Naive thymus-derived CD4-positive, alpha-beta T cell (primary cell): ENCODE measurements at regions of chr3 and their contacts with region 1.

Region 1: DNA sequence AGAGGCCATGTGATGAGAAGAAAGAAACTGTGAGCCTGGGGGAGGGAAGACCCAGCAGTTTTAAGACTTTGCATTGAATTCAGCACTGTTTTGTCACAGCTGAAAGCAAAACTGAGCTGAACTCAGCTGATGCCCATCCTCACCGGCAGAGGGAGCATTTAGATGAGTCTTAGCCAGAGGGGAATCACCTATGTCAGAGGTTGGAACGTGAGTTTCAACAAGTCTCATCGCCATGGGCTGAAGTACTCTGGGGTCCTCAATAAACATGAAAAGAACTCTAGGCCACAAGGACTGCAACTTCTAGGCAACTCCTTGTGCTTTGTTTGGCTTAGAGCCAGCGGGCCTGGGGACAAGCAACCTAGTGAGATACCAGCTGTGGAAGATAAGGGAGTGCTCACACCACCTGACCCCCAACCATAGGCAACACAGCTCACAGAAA is 324.5 kb downstream of the TBL1XR1 start:
- DNase-seq: peak; percentile 10 to 61 (median 39)
- ATAC-seq: peak; percentile 83
- H3K4me3 ChIP-seq: no peak overlapping the region
- H3K4me3 Mint-ChIP-seq: no peak overlapping the region
- H3K27ac ChIP-seq: no peak overlapping the region
- H3K27ac Mint-ChIP-seq: peak overlapping the region in 3 of 9 donors; percentile 8 to 63 (median 26)
- H3K4me1 ChIP-seq: no peaks in the 10 kb centered on the region
- H3K4me1 Mint-ChIP-seq: peaks cover 0 to 9% (median 6%) of the 10 kb centered on the region in 7 donors
- H3K27me3 ChIP-seq: no peaks in the 10 kb centered on the region
- H3K27me3 Mint-ChIP-seq: peaks cover 0 to 11% (median 3%) of the 10 kb centered on the region in 5 donors

Region 2: DNA sequence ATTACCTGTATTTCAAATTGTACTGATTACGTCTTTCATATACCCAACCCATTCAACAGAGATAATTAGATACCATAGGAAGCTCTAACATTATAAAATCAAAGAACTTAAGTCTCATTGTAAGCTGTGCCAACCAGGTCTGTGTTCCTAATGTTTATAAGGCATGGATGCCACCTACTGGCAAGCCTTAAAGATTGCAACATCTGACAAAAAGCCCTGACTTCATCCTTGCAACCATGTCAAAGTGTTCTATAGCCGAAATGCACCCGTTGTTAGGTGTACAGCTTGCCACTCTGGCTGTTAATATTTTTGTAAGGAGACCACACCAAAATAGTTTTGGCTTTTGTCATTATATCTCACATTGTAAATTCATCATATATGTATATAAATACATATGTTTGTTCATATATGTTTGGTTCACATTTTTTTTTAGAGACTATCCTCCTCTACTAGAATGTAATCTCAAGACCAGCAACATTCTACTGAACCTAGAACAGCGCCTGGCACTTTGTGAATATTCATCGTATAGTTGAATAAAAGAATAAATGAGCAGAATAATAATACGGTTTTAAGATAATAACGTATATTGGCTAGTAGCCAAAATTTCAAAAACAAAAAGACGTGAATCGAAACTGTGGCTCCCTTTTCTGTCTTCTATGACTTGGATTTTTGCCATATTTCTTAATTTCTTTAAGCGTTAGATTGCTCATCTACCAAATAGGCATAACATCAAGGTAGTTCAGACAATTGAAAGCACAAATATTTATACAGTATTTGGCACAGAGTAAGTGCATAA is 66.4 kb after region 1 on chr3:
- CTCF ChIA-PET with region 1: interaction called, 9 read pairs
- POLR2A ChIA-PET with region 1: no interaction called
- intact Hi-C with region 1: loop called (anchors 1 kb)
- DNase-seq: peak in 7 of 9 donors; percentile 12 to 60 (median 43)
- ATAC-seq: peak; percentile 75
- H3K4me3 ChIP-seq: no peak overlapping the region
- H3K4me3 Mint-ChIP-seq: no peak overlapping the region
- H3K27ac ChIP-seq: no peak overlapping the region
- H3K27ac Mint-ChIP-seq: no peak overlapping the region
- H3K4me1 ChIP-seq: no peaks in the 10 kb centered on the region
- H3K4me1 Mint-ChIP-seq: no peaks in the 10 kb centered on the region
- H3K27me3 ChIP-seq: peaks cover 0 to 3% of the 10 kb centered on the region in 2 donors
- H3K27me3 Mint-ChIP-seq: peaks cover 4 to 21% (median 10%) of the 10 kb centered on the region in 5 donors

Region 3: DNA sequence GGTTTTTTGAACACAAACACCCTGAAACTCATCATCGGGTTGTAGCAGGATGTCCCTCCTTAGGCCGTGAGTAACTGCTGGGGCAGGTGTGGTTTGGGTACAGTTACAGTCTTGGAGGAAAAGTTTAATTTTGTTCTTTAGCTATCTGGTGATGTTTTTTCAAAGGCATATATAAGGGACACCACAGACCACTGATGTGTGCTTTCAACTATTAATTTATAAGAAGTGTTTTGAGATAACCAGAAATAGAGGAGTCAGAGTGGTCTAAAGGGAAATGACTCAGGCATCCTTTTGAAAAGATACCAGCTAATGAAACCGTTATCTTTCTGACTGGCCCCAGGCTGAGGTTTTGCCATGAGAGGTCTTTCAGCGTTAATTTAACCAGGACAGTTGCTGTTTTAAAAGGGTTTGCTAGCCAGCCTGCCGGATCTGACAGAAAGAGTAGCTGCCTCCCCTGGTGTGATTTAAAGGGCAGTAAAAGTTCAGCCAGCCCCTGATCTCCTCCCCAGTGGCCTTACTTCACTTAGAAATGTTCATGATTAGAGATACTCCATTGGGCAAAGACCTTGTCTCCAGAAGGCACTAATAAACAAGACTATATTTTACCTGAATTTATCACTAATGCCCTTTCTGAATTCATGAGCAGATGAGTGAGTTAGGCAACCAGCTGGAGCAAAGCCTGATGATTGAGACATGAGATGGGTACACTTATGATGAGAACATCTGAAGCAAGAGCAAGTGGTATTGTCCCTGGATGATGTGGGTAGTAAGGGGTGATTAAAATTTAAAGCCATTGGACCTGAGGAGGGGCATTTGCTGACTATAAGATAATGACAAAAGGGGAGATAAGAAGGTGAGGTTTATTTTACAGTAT is 807.0 kb after region 1 on chr3:
- CTCF ChIA-PET with region 1: no interaction called
- POLR2A ChIA-PET with region 1: no interaction called
- intact Hi-C with region 1: loop called in 1 of 2 experiments (anchors 5 kb)
- DNase-seq: no peak
- ATAC-seq: peak; percentile 67
- H3K4me3 ChIP-seq: no peak overlapping the region
- H3K4me3 Mint-ChIP-seq: no peak overlapping the region
- H3K27ac ChIP-seq: no peak overlapping the region
- H3K27ac Mint-ChIP-seq: peak overlapping the region in 3 of 9 donors; percentile 7 to 28 (median 27)
- H3K4me1 ChIP-seq: peaks cover 0 to 37% of the 10 kb centered on the region in 2 donors
- H3K4me1 Mint-ChIP-seq: peaks cover 0 to 38% (median 16%) of the 10 kb centered on the region in 7 donors
- H3K27me3 ChIP-seq: no peaks in the 10 kb centered on the region
- H3K27me3 Mint-ChIP-seq: no peaks in the 10 kb centered on the region

Region 4: GRCh38 chr3:177777699-177778098 is 904.9 kb after region 1 on chr3:
- CTCF ChIA-PET with region 1: no interaction called
- POLR2A ChIA-PET with region 1: no interaction called
- intact Hi-C with region 1: loop called in 1 of 2 experiments (anchors 2 kb)
- DNase-seq: peak in 5 of 9 donors; percentile 10 to 35 (median 26)
- ATAC-seq: peak; percentile 65
- H3K4me3 ChIP-seq: no peak overlapping the region
- H3K4me3 Mint-ChIP-seq: peak overlapping the region in 1 of 10 donors; percentile 16
- H3K27ac ChIP-seq: no peak overlapping the region
- H3K27ac Mint-ChIP-seq: peak overlapping the region in 3 of 9 donors; percentile 21 to 55 (median 29)
- H3K4me1 ChIP-seq: peaks cover 9 to 18% of the 10 kb centered on the region in 2 donors
- H3K4me1 Mint-ChIP-seq: peaks cover 13 to 20% (median 15%) of the 10 kb centered on the region in 7 donors
- H3K27me3 ChIP-seq: no peaks in the 10 kb centered on the region
- H3K27me3 Mint-ChIP-seq: no peaks in the 10 kb centered on the region

Region 5: DNA sequence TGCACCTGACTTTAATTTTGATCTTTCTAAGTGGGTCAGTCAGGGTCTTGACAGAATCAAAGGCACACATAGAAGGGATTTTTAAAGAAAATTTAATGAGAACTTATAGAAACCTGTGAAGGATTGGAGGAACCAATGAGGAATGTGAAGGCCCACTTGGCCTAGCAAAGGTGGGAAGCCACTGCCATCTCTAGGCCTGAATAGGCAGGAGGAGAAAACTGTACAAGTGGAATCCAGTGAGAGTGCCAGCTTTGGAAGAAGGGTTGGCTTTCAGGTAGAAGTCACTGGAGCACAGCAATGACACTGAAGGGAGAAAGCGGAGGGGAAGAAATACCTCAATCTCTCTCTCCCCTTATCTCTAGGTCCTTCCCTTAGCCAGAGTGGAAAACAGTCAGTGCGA is 1282.7 kb after region 1 on chr3:
- CTCF ChIA-PET with region 1: no interaction called
- POLR2A ChIA-PET with region 1: no interaction called
- intact Hi-C with region 1: loop called in 1 of 2 experiments (anchors 2 kb)
- DNase-seq: no peak
- ATAC-seq: no peak
- H3K4me3 ChIP-seq: no peak overlapping the region
- H3K4me3 Mint-ChIP-seq: no peak overlapping the region
- H3K27ac ChIP-seq: no peak overlapping the region
- H3K27ac Mint-ChIP-seq: no peak overlapping the region
- H3K4me1 ChIP-seq: no peaks in the 10 kb centered on the region
- H3K4me1 Mint-ChIP-seq: peaks cover 0 to 11% (median 5%) of the 10 kb centered on the region in 7 donors
- H3K27me3 ChIP-seq: no peaks in the 10 kb centered on the region
- H3K27me3 Mint-ChIP-seq: peaks cover 0 to 3% (median 0%) of the 10 kb centered on the region in 5 donors

Region 6: GRCh38 chr3:178325330-178325729 is 1452.5 kb after region 1 on chr3:
- CTCF ChIA-PET with region 1: interaction called, 3 read pairs
- POLR2A ChIA-PET with region 1: no interaction called
- intact Hi-C with region 1: loop called (anchors 1 to 5 kb)
- DNase-seq: peak in 4 of 9 donors; percentile 5 to 33 (median 22)
- ATAC-seq: no peak
- H3K4me3 ChIP-seq: no peak overlapping the region
- H3K4me3 Mint-ChIP-seq: no peak overlapping the region
- H3K27ac ChIP-seq: no peak overlapping the region
- H3K27ac Mint-ChIP-seq: no peak overlapping the region
- H3K4me1 ChIP-seq: no peaks in the 10 kb centered on the region
- H3K4me1 Mint-ChIP-seq: no peaks in the 10 kb centered on the region
- H3K27me3 ChIP-seq: no peaks in the 10 kb centered on the region
- H3K27me3 Mint-ChIP-seq: no peaks in the 10 kb centered on the region

Region 7: DNA sequence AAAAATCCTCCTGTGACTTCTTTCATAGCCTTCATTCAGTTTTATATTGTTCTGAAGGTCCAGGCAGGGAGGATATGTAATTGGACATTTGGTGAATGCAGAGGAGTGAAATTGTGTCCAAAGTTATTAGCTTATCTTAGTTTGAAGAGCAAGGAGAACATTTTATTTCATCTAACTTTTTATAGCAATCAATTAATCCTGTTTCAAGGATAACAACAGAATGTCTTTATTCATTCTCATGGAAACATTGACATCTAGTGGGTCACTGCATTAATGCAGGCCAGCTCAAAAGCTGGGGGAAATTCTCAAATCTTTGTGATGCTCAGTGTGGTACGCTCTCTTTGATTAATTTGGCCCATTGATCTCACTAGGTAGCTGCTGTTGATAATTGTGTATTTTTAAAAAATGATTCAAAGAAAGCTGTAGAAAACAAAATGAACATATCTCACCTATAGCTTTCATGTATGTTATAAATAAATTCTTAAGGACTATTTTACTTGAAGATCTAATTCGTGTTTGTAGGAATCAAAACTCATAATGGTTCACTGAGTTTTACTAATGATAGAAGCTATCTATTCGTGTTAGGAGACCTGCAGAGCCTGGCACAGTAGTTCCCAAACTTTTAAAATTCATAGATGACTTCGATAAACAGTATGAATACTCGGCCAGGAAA is 1512.6 kb after region 1 on chr3:
- CTCF ChIA-PET with region 1: interaction called, 14 read pairs
- POLR2A ChIA-PET with region 1: no interaction called
- intact Hi-C with region 1: loop called (anchors 1 kb)
- DNase-seq: peak in 5 of 9 donors; percentile 23 to 44 (median 41)
- ATAC-seq: peak; percentile 56
- H3K4me3 ChIP-seq: no peak overlapping the region
- H3K4me3 Mint-ChIP-seq: no peak overlapping the region
- H3K27ac ChIP-seq: no peak overlapping the region
- H3K27ac Mint-ChIP-seq: peak overlapping the region in 1 of 9 donors; percentile 4
- H3K4me1 ChIP-seq: no peaks in the 10 kb centered on the region
- H3K4me1 Mint-ChIP-seq: no peaks in the 10 kb centered on the region
- H3K27me3 ChIP-seq: no peaks in the 10 kb centered on the region
- H3K27me3 Mint-ChIP-seq: peaks cover 0 to 12% (median 4%) of the 10 kb centered on the region in 5 donors